ENCODE measurements at regions of chr22 and their contacts with region 1.

Region 1: GRCh38 chr22:35648066-35649025 is at the start of gene APOL6:
- DNase-seq: peak; percentile 24 to 82 (median 52)
- ATAC-seq: peak; percentile 78 to 82 (median 80)
- H3K4me3 ChIP-seq: peak within 1 kb of the TSS; percentile 95
- H3K4me3 Mint-ChIP-seq: peak within 1 kb of the TSS; percentile 95 to 100 (median 100)
- H3K27ac ChIP-seq: peak within 1 kb of the TSS; percentile 93
- H3K27ac Mint-ChIP-seq: peak within 1 kb of the TSS; percentile 100
- H3K4me1 ChIP-seq: peaks cover 13 to 37% of the 10 kb centered on the region in 2 experiments
- H3K4me1 Mint-ChIP-seq: peaks cover 34 to 53% (median 48%) of the 10 kb centered on the region in 3 donors
- H3K27me3 ChIP-seq: no peaks in the 10 kb centered on the region
- H3K27me3 Mint-ChIP-seq: no peaks in the 10 kb centered on the region
- total RNA-seq, gene APOL6: 47.5 to 55.7 (median 52.3) TPM

Region 2: DNA sequence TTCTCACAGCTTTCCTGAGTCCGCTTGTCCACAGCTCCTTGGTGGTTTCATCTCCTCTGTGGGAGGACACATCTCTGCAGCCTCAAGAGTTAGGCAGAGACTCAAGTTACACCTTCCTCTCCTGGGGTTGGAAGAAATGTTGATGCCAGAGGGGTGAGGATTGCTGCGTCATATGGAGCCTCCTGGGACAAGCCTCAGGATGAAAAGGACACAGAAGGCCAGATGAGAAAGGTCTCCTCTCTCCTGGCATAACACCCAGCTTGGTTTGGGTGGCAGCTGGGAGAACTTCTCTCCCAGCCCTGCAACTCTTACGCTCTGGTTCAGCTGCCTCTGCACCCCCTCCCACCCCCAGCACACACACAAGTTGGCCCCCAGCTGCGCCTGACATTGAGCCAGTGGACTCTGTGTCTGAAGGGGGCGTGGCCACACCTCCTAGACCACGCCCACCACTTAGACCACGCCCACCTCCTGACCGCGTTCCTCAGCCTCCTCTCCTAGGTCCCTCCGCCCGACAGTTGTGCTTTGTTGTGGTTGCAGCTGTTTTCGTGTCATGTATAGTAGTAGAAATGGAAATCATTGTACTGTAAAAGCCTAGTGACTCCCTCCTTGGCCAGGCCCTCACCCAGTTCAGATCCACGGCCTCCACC is 96.0 kb before region 1 on chr22:
- CTCF ChIA-PET with region 1: no interaction called
- POLR2A ChIA-PET with region 1: no interaction called
- DNase-seq: peak; percentile 67 to 90 (median 79)
- ATAC-seq: peak; percentile 93 to 98 (median 98)
- H3K4me3 ChIP-seq: no peak overlapping the region
- H3K4me3 Mint-ChIP-seq: peak overlapping the region; percentile 24 to 45 (median 45)
- H3K27ac ChIP-seq: no peak overlapping the region
- H3K27ac Mint-ChIP-seq: peak overlapping the region; percentile 0 to 13
- H3K4me1 ChIP-seq: peaks cover 7 to 24% of the 10 kb centered on the region in 2 experiments
- H3K4me1 Mint-ChIP-seq: peaks cover 15 to 20% (median 17%) of the 10 kb centered on the region in 3 donors
- H3K27me3 ChIP-seq: peaks cover 0 to 29% of the 10 kb centered on the region in 2 experiments
- H3K27me3 Mint-ChIP-seq: peaks cover under 1 to 2% of the 10 kb centered on the region in 2 donors

Region 3: DNA sequence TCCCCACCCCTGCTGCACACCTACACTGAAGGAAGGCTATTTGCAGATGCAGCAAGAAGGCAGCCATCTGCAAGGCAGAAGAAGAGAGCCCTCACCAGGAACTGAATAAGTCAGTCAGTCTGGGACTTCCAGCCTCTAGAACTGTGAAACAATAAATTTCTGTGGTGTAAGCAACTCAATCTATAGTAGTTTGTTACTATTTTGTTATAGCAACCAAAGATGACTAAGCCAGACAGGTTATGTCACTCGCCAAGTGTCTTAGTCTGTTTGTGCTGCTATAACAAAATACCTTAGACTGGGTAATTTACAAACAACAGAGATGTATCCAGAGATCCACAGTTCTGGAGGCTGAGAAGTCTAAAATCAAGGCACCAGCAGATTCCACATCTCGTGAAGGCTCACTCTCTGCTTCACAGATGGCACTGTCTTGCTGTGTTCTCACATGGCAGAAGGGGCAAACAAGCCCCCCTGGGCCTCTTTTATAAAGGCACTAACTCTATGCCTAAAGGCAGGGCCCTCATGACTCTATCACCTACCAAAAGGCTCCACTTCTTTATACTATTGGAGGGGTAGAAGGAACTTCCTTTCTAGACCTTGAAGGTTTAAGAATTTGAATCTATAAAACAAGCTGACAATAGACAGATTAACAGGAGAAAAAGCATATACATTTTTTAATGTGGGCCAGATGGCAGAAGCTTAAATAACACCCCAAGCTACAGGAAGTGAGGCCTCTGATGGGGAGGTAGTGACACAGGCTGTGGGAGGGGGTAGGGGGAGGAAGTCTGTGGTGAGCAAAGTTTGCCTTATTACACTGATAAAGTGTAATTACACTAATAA is 12.2 kb after region 1 on chr22:
- CTCF ChIA-PET with region 1: interaction called, 4 to 22 read pairs
- POLR2A ChIA-PET with region 1: interaction called, 11 to 32 read pairs
- DNase-seq: peak; percentile 35 to 84 (median 75)
- ATAC-seq: peak; percentile 91 to 98 (median 96)
- H3K4me3 ChIP-seq: peak overlapping the region; percentile 11 to 21
- H3K4me3 Mint-ChIP-seq: peak overlapping the region; percentile 54 to 66 (median 62)
- H3K27ac ChIP-seq: peak overlapping the region; percentile 97
- H3K27ac Mint-ChIP-seq: peak overlapping the region; percentile 94 to 98
- H3K4me1 ChIP-seq: peaks cover 40 to 49% of the 10 kb centered on the region in 2 experiments
- H3K4me1 Mint-ChIP-seq: peaks cover 74 to 83% (median 82%) of the 10 kb centered on the region in 3 donors
- H3K27me3 ChIP-seq: no peaks in the 10 kb centered on the region
- H3K27me3 Mint-ChIP-seq: no peaks in the 10 kb centered on the region

Region 4: GRCh38 chr22:36156515-36157419 is 508.4 kb after region 1 on chr22:
- CTCF ChIA-PET with region 1: no interaction called
- POLR2A ChIA-PET with region 1: no interaction called
- DNase-seq: peak in 34 of 35 experiments; percentile 41 to 86 (median 71)
- ATAC-seq: peak; percentile 25 to 70 (median 34)
- H3K4me3 ChIP-seq: peak overlapping the region; percentile 66 to 78
- H3K4me3 Mint-ChIP-seq: peak overlapping the region; percentile 95 to 98 (median 96)
- H3K27ac ChIP-seq: peak overlapping the region; percentile 95
- H3K27ac Mint-ChIP-seq: peak overlapping the region; percentile 99 to 100
- H3K4me1 ChIP-seq: peaks cover 29 to 85% of the 10 kb centered on the region in 2 experiments
- H3K4me1 Mint-ChIP-seq: peaks cover 83 to 99% (median 98%) of the 10 kb centered on the region in 3 donors
- H3K27me3 ChIP-seq: no peaks in the 10 kb centered on the region
- H3K27me3 Mint-ChIP-seq: no peaks in the 10 kb centered on the region

Measured in T-cell (primary cell).